GM13977 (cell line): ENCODE measurements at regions of chr3 and their contacts with region 1.

Region 1: GRCh38 chr3:196192036-196192523 is 19.1 kb downstream of the ZDHHC19 start:
- DNase-seq: peak; percentile 54
- CTCF ChIP-seq: peak; percentile 40

Region 2: DNA sequence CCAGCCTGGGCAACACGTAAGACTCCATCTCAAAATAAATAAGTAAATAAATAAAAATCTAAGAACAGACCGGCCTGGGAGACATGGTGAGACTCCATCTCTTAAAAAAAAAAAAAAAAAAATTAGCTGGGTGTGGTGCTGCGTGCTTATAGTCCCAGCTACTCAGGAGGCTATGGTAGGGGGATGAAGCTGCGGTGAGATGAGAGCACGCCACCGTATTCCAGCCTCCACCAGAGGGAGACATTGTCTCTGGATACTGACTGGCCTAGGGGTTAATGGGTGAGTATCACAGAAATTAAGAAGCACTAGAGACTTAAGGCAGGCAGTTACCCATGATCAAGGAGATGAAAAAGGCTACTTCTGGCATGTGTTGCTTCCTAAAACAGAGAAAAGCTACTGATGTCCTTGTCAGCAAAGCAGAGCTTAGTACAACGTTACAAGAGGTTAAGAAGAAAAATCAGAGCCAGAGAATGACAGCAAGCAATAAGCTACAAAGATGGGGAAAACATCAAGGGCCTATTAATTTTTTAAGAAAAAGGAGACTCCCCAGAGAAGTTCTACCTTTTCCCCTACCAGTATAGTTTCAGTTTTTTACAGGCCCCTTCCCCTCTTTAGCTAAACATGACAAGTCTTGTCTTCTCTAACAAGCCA is 118.8 kb before region 1 on chr3:
- in situ Hi-C with region 1: loop called (anchors 10 kb)
- DNase-seq: peak; percentile 55
- CTCF ChIP-seq: peak; percentile 83

Region 3: DNA sequence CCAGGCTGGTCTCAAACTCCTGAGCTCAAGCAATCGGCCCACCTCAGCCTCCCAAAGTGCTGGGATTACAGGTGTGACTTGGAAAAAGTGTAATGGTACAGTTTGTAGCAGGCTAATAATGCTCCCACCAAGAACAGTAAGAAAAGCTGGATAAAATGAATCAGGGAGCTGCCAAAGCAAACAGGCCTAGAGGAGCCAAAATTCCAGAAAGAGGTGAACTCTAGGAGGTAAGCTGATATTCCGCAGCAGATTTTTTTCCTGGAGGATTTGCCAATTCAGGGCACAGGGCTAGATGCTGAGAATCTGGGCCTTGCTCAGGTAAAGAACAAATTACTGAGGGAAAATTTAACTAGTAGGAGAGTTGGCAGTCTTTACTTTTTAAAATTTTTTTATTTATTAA is 106.4 kb after region 1 on chr3:
- in situ Hi-C with region 1: no loop called
- DNase-seq: no peak
- CTCF ChIP-seq: no peak